ENCODE measurements at regions of chr18 and their contacts with region 1.

Region 1: DNA sequence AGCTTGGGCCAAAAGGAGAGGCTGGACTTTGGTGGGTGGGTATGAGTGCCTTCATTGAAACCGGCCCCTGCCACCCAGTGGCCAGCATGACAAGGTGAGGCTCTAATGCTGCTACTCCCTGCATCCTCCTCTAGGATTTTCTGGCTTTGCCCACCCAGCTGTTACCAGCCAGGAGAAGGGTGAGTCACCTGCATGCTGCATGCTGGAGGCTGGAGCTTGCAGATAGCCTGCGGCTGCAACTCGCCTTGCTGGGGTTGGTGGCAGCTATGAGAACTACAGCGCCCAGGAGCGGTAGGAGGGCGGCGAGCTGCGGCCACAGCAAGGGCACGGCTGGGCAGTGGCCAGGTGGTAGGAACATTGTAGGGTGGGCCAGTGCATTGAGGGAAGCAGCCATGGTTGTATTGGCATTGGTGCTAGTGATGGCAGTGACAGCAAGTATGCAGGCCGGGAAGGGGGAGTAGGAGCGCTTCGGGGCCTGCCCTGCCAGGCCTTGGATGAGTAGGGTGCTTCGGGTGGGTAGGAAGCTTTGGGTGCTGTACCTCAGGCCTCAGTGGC is 75.4 kb upstream of the SLC35G4 start:
- DNase-seq: no peak

Region 2: DNA sequence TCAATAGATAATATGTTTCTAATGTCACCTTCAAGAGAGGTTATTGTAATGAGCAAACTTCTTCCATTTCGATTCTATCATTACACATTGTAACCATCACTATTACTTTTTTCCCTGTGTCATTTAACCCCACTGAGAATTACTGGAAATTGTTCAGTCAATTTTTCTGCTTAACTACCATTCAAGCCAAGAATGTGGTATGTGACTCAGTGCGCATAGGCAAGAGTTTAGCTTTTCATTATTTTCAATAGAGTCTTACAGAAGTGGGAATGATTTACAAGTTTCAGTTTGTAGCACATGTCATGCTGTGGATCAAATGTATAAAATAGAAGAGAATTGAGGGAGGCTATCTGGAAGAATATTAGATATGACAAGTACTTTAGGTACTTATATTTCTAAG is 350.4 kb before region 1 on chr18:
- intact Hi-C with region 1: loop called in 1 of 2 experiments (anchors 10 kb)
- DNase-seq: no peak

Region 3: DNA sequence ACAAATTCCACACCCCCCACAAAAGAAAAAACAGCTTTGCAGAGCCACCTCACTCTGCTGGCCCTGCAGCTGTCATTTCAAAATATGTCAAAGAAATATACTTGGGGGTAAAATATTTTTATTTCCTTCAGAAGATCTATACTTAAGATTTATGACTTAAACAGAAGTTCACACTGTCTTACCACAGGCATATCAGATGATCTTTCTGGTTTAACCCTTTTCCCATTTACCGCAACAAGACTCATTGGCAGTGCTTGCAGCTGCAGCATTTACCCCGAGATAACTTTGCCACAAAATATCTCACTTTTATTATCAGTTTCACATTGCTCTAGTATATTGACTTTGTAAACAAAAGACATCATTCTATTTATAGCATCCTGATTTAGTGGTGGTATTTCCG is 53.8 kb after region 1 on chr18:
- intact Hi-C with region 1: loop called in 1 of 2 experiments (anchors 10 kb)
- DNase-seq: no peak

Measured in posterior vena cava (tissue), 2 donors.